ENCODE measurements at regions of chr18 and their contacts with region 1.

Region 1: DNA sequence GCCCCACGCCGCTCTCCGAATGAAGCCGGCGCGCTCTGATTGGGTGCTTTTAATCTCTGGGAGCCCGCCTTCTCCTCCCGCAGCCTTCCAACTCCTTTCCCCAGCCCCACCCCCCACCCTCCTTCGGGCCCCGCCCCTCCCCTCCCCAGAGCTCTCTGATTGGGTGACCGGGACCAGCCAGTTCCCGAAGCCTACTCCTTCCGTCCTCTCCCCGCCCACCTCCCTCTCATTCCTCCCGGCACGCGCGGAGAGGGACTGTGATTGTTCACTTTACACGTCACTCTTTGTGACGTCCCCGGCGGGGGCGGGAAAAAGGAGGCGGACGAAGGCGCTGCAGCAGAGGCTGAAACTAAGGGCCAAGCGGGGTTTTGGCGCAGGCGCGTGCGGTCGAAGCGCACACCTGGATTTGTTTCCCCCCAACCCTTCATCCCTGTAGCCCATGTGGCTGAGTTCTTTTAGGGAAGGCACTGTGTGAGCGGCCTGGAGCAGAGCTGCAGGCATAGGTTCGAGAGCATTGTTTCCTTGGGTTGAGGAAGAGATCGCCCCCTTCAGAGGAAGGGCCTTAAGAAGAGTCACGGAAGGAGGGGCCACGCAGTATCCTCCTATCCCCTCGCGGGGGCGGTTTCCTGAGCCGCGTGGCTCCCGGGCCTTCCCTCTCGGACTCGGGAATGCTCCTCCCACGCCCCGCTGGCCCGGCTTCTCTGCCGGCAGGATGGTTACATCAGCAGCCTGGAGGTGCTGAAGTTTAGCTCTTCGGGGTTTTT is at the start of gene MEX3C:
- DNase-seq: peak; percentile 96 to 100 (median 99)
- H3K4me3 ChIP-seq: peak within 1 kb of the TSS; percentile 68 to 95 (median 86)
- H3K27ac ChIP-seq: peak within 1 kb of the TSS; percentile 74 to 99 (median 94)
- H3K27me3 ChIP-seq: no peaks in the 10 kb centered on the region
- CTCF ChIP-seq: peak in 54 of 56 donors; percentile 18 to 70 (median 50)
- total RNA-seq, gene MEX3C: 16.1 to 34.8 (median 23.9) TPM

Region 2: GRCh38 chr18:50878345-50879301 is 319.2 kb before region 1 on chr18 and contains the start of gene ME2:
- intact Hi-C with region 1: loop called in 1 of 2 experiments (anchors 10 kb)
- DNase-seq: peak; percentile 81 to 98 (median 92)
- H3K4me3 ChIP-seq: peak within 1 kb of the TSS; percentile 64 to 99 (median 91)
- H3K27ac ChIP-seq: peak within 1 kb of the TSS; percentile 44 to 96 (median 88)
- H3K27me3 ChIP-seq: no peaks in the 10 kb centered on the region
- CTCF ChIP-seq: peak in 12 of 56 donors; percentile 3 to 30 (median 14)
- total RNA-seq, gene ME2: 31.2 to 57.8 (median 42.9) TPM

Region 3: GRCh38 chr18:51029694-51030536 is 167.9 kb before region 1 on chr18 and contains the start of gene SMAD4:
- intact Hi-C with region 1: loop called in 1 of 2 experiments (anchors 2 kb)
- DNase-seq: peak; percentile 90 to 97 (median 94)
- H3K4me3 ChIP-seq: peak within 1 kb of the TSS; percentile 58 to 96 (median 83)
- H3K27ac ChIP-seq: peak within 1 kb of the TSS; percentile 85 to 100 (median 96)
- H3K27me3 ChIP-seq: no peaks in the 10 kb centered on the region
- CTCF ChIP-seq: peak in 31 of 56 donors; percentile 2 to 55 (median 29)
- total RNA-seq, gene SMAD4: 64.8 to 122 (median 86.8) TPM

Region 4: GRCh38 chr18:51390702-51391101 is 192.9 kb after region 1 on chr18:
- intact Hi-C with region 1: loop called (anchors 5 to 10 kb)
- DNase-seq: no peak
- H3K4me3 ChIP-seq: no peak overlapping the region
- H3K27ac ChIP-seq: peak overlapping the region in 35 of 59 donors; percentile 5 to 86 (median 76)
- H3K27me3 ChIP-seq: no peaks in the 10 kb centered on the region
- CTCF ChIP-seq: no peak

Region 5: GRCh38 chr18:51537487-51537886 is 339.6 kb after region 1 on chr18:
- intact Hi-C with region 1: loop called in 1 of 2 experiments (anchors 10 kb)
- DNase-seq: peak in 9 of 10 donors; percentile 46 to 77 (median 63)
- H3K4me3 ChIP-seq: peak overlapping the region in 2 of 59 donors; percentile 14 to 17
- H3K27ac ChIP-seq: no peak overlapping the region
- H3K27me3 ChIP-seq: no peaks in the 10 kb centered on the region
- CTCF ChIP-seq: peak in 54 of 56 donors; percentile 24 to 84 (median 60)